ENCODE measurements at regions of chr7 and their contacts with region 1.

Region 1: GRCh38 chr7:126450269-126450671 is 802.5 kb downstream of the GRM8 start:
- DNase-seq: no peak
- ATAC-seq: no peak
- H3K4me3 ChIP-seq: no peak overlapping the region
- H3K4me3 Mint-ChIP-seq: no peak overlapping the region
- H3K27ac ChIP-seq: no peak overlapping the region
- H3K27ac Mint-ChIP-seq: no peak overlapping the region
- H3K4me1 ChIP-seq: no peaks in the 10 kb centered on the region
- H3K4me1 Mint-ChIP-seq: no peaks in the 10 kb centered on the region
- H3K27me3 ChIP-seq: no peaks in the 10 kb centered on the region
- H3K27me3 Mint-ChIP-seq: no peaks in the 10 kb centered on the region
- CTCF ChIP-seq: no peak

Region 2: DNA sequence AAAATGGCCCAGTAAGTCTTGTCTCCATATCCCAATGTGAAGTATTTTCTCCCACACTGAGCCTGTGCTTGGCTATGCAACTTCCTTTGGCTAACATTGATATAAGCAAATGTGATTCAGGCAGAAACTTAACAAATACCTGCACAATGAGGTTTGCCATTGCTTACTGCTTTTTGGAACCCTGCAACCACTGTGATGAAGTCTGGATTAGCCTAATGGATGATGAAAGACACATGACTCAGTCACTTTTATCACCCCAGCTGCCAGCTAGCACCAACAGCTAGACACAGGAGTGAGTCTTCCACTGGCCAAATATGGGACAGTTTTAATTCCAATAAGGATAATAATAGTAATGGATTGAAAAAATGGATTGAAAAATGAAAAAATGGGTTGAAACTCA is 52.0 kb before region 1 on chr7:
- intact Hi-C with region 1: loop called (anchors 10 kb)
- DNase-seq: no peak
- ATAC-seq: no peak
- H3K4me3 ChIP-seq: no peak overlapping the region
- H3K4me3 Mint-ChIP-seq: no peak overlapping the region
- H3K27ac ChIP-seq: no peak overlapping the region
- H3K27ac Mint-ChIP-seq: no peak overlapping the region
- H3K4me1 ChIP-seq: no peaks in the 10 kb centered on the region
- H3K4me1 Mint-ChIP-seq: no peaks in the 10 kb centered on the region
- H3K27me3 ChIP-seq: no peaks in the 10 kb centered on the region
- H3K27me3 Mint-ChIP-seq: no peaks in the 10 kb centered on the region
- CTCF ChIP-seq: no peak